ENCODE measurements at regions of chr17 and their contacts with region 1.

Region 1: GRCh38 chr17:13594762-13595598 is 6.7 kb downstream of the HS3ST3A1 start:
- DNase-seq: peak in 2 of 3 donors; percentile 53 to 94
- ATAC-seq: peak; percentile 70
- H3K4me3 ChIP-seq: no peak overlapping the region
- H3K4me1 ChIP-seq: no peaks in the 10 kb centered on the region
- CTCF ChIP-seq: peak; percentile 72

Region 2: GRCh38 chr17:14300575-14301278 is 705.7 kb after region 1 on chr17 and contains the start of gene HS3ST3B1:
- intact Hi-C with region 1: loop called (anchors 5 kb)
- DNase-seq: peak; percentile 98 to 99 (median 98)
- ATAC-seq: peak; percentile 88
- H3K4me3 ChIP-seq: peak within 1 kb of the TSS; percentile 30
- H3K4me1 ChIP-seq: peaks cover 52% of the 10 kb centered on the region
- CTCF ChIP-seq: no peak
- total RNA-seq, gene HS3ST3B1: 1.4 to 1.6 (median 1.5) TPM

Region 3: DNA sequence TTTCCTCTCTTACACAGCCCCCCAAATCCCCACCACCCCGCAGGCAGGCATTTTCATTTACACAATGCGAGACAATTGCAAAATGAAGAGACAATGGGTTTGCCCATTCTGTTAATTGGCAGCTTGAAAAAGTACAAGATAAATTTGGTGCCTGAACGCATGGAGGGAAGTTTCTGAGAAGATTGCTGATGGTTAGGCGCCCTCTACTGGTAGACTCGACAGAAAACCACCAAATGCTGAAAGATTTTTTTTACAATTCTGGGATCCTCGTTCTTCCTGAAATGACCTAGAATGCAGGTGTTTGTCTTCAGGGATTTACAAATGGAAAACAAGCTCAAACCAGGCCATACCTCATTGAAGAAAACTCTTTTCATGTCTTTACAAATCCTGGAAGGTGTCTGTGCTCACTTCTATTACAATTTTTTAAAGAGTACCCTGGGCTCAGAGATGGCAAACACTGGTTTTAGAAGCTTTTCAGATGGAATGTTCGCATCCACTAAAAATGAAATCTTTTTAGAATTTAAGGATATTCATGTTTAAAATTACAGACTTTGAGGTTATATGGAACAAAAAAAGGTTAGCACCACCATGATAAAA is 1331.6 kb after region 1 on chr17:
- intact Hi-C with region 1: loop called (anchors 10 kb)
- DNase-seq: peak in 1 of 3 donors; percentile 73
- ATAC-seq: peak; percentile 36
- H3K4me3 ChIP-seq: no peak overlapping the region
- H3K4me1 ChIP-seq: no peaks in the 10 kb centered on the region
- CTCF ChIP-seq: peak; percentile 58

Measured in mucosa of descending colon (tissue), 3 donors.